ENCODE measurements at regions of chr1 and their contacts with region 1.

Region 1: GRCh38 chr1:184145083-184145482 is 93.6 kb downstream of the TSEN15 start:
- DNase-seq: no peak
- H3K4me3 ChIP-seq: no peak overlapping the region
- H3K27ac ChIP-seq: no peak overlapping the region
- H3K4me1 ChIP-seq: peaks cover 0 to 3% (median 0%) of the 10 kb centered on the region in 3 donors
- H3K27me3 ChIP-seq: no peaks in the 10 kb centered on the region
- CTCF ChIP-seq: no peak
- POLR2A ChIP-seq: no peak

Region 2: DNA sequence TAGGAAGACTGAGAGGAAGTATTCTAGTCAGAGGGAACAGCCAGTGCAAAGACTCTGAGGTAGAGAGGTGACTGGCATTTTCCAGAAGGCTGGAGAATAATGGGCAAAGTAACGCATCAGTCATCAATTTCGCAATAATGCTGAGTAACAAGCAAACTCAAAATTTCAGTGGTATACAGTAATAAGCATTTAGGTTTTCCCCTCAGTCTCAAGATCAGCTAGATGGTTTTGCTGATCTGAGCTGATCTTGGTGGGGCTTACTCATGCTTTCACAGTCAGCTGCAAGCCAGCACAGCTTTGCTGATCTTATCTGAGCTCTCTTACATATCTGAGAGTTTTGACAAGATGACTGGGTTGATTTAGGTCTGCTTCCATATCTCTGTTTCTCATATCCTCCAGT is 15.2 kb after region 1 on chr1:
- intact Hi-C with region 1: loop called (anchors 2 kb)
- DNase-seq: no peak
- H3K4me3 ChIP-seq: no peak overlapping the region
- H3K27ac ChIP-seq: peak overlapping the region in 3 of 4 donors; percentile 24 to 70 (median 50)
- H3K4me1 ChIP-seq: peaks cover 0 to 7% (median 4%) of the 10 kb centered on the region in 3 donors
- H3K27me3 ChIP-seq: no peaks in the 10 kb centered on the region
- CTCF ChIP-seq: no peak
- POLR2A ChIP-seq: no peak